ENCODE measurements at regions of chr5 and their contacts with region 1.

Region 1: GRCh38 chr5:115415143-115415491 is 118.7 kb upstream of the CCDC112 start:
- DNase-seq: peak; percentile 88
- H3K4me3 Mint-ChIP-seq: peak overlapping the region; percentile 37
- H3K27ac Mint-ChIP-seq: peak overlapping the region; percentile 96
- H3K4me1 Mint-ChIP-seq: peaks cover 64% of the 10 kb centered on the region
- H3K27me3 Mint-ChIP-seq: no peaks in the 10 kb centered on the region
- CTCF ChIP-seq: no peak

Region 2: GRCh38 chr5:115246361-115246991 is 168.6 kb before region 1 on chr5:
- CTCF ChIA-PET with region 1: no interaction called
- intact Hi-C with region 1: no loop called
- DNase-seq: no peak
- H3K4me3 Mint-ChIP-seq: no peak overlapping the region
- H3K27ac Mint-ChIP-seq: no peak overlapping the region
- H3K4me1 Mint-ChIP-seq: peaks cover 31% of the 10 kb centered on the region
- H3K27me3 Mint-ChIP-seq: no peaks in the 10 kb centered on the region
- CTCF ChIP-seq: peak; percentile 70

Region 3: GRCh38 chr5:115377468-115378217 is 37.5 kb before region 1 on chr5:
- CTCF ChIA-PET with region 1: interaction called, 18 read pairs
- intact Hi-C with region 1: loop called (anchors 1 kb)
- DNase-seq: peak; percentile 30
- H3K4me3 Mint-ChIP-seq: peak overlapping the region; percentile 41
- H3K27ac Mint-ChIP-seq: peak overlapping the region; percentile 95
- H3K4me1 Mint-ChIP-seq: peaks cover 59% of the 10 kb centered on the region
- H3K27me3 Mint-ChIP-seq: no peaks in the 10 kb centered on the region
- CTCF ChIP-seq: no peak

Region 4: GRCh38 chr5:115431116-115431515 is 16.0 kb after region 1 on chr5:
- CTCF ChIA-PET with region 1: interaction called, 10 read pairs
- intact Hi-C with region 1: no loop called
- DNase-seq: no peak
- H3K4me3 Mint-ChIP-seq: no peak overlapping the region
- H3K27ac Mint-ChIP-seq: no peak overlapping the region
- H3K4me1 Mint-ChIP-seq: peaks cover 65% of the 10 kb centered on the region
- H3K27me3 Mint-ChIP-seq: no peaks in the 10 kb centered on the region
- CTCF ChIP-seq: no peak

Region 5: GRCh38 chr5:115460472-115460871 is 45.4 kb after region 1 on chr5:
- CTCF ChIA-PET with region 1: no interaction called
- intact Hi-C with region 1: loop called (anchors 2 kb)
- DNase-seq: peak; percentile 60
- H3K4me3 Mint-ChIP-seq: no peak overlapping the region
- H3K27ac Mint-ChIP-seq: no peak overlapping the region
- H3K4me1 Mint-ChIP-seq: peaks cover 18% of the 10 kb centered on the region
- H3K27me3 Mint-ChIP-seq: no peaks in the 10 kb centered on the region
- CTCF ChIP-seq: no peak

Region 6: GRCh38 chr5:115467628-115468027 is 52.5 kb after region 1 on chr5:
- CTCF ChIA-PET with region 1: interaction called, 3 read pairs
- intact Hi-C with region 1: loop called (anchors 2 kb)
- DNase-seq: no peak
- H3K4me3 Mint-ChIP-seq: peak overlapping the region; percentile 46
- H3K27ac Mint-ChIP-seq: peak overlapping the region; percentile 90
- H3K4me1 Mint-ChIP-seq: peaks cover 51% of the 10 kb centered on the region
- H3K27me3 Mint-ChIP-seq: no peaks in the 10 kb centered on the region
- CTCF ChIP-seq: no peak

Region 7: DNA sequence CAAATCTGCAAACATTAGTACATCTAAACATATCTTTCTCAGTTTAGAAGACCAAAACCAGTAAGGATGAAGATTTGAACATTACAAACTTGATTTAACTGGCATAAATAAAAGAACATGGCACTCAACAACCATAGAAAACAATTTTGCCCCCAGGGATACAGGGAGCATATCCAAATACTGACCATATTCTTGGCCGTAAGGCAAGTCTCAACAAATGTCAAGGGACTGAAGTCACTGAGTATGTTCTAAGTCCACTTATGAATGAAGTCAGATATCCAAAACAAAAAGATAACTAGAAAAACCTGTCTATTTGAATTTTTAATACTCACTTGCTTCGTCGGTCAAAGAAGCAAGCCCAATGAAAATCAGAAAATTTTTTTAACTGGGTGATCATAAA is 115.3 kb after region 1 on chr5:
- CTCF ChIA-PET with region 1: no interaction called
- intact Hi-C with region 1: loop called (anchors 5 kb)
- DNase-seq: no peak
- H3K4me3 Mint-ChIP-seq: peak overlapping the region; percentile 69
- H3K27ac Mint-ChIP-seq: peak overlapping the region; percentile 85
- H3K4me1 Mint-ChIP-seq: peaks cover 75% of the 10 kb centered on the region
- H3K27me3 Mint-ChIP-seq: no peaks in the 10 kb centered on the region
- CTCF ChIP-seq: no peak

Region 8: GRCh38 chr5:116289276-116289675 is 874.2 kb after region 1 on chr5:
- CTCF ChIA-PET with region 1: no interaction called
- intact Hi-C with region 1: no loop called
- DNase-seq: peak; percentile 15
- H3K4me3 Mint-ChIP-seq: no peak overlapping the region
- H3K27ac Mint-ChIP-seq: no peak overlapping the region
- H3K4me1 Mint-ChIP-seq: peaks cover 9% of the 10 kb centered on the region
- H3K27me3 Mint-ChIP-seq: no peaks in the 10 kb centered on the region
- CTCF ChIP-seq: peak; percentile 39